Left cardiac atrium (tissue), 4 donors: ENCODE measurements at regions of chr5 and their contacts with region 1.

Region 1: DNA sequence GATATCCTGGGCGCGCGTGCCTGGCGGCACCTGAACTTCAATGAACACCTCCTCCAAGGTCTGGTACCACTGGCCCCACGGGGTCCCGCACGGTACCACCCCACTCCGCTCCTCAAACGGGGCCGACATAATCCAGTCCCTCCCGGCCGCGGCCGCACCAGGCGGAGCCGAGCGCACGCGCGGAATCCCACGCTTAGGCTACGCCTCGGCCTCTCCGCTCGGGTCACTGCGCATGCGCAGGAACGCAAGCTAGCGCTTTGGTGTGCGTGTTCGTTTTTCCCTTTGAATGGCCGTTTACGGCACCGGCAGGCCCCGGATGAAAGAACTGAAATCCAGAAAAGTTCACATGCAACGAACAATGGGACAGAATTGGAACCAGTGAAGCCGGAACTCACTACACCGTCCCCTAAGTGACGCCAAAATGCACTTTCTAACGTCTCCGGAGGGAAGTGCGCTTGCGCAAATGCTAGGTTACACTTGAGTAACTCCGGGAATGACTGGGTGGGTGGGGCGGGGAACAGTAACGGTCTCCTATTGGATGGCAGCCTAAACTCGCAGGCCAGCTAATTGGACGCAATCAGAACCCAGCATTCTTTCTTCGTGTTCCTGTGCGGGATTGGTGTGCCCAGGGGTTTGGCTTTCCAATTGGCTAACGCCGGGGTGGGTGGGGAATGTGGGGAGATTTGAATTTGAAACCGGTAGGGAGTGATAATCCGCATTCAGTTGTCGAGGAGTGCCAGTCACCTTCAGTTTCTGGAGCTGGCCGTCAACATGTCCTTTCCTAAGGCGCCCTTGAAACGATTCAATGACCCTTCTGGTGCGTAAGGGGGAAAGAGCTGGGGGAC is at the starts of genes HMMR and NUDCD2:
- DNase-seq: peak; percentile 97
- ATAC-seq: peak; percentile 95 to 97
- total RNA-seq, gene HMMR: 0.52 to 1.7 TPM
- total RNA-seq, gene NUDCD2: 15.7 to 16.4 TPM

Region 2: GRCh38 chr5:163503106-163504078 is 43.2 kb after region 1 on chr5:
- intact Hi-C with region 1: loop called in 1 of 2 experiments (anchors 5 kb)
- DNase-seq: peak; percentile 67
- ATAC-seq: peak; percentile 26 to 29